Motor neuron (in vitro differentiated cells): ENCODE measurements at regions of chr17 and their contacts with region 1.

Region 1: GRCh38 chr17:72539981-72540897 is 419.4 kb downstream of the SOX9 start:
- ATAC-seq: peak; percentile 90 to 99 (median 94)
- H3K4me3 ChIP-seq: peak overlapping the region in 3 of 5 donors; percentile 13 to 18 (median 15)
- H3K27ac ChIP-seq: no peak overlapping the region
- H3K4me1 ChIP-seq: peaks cover 22 to 27% of the 10 kb centered on the region in 2 donors

Region 2: GRCh38 chr17:70636517-70637133 is 1903.6 kb before region 1 on chr17:
- in situ Hi-C with region 1: loop called in 5 of 9 experiments (anchors 10 to 25 kb)
- ATAC-seq: peak in 1 of 8 experiments; percentile 38
- H3K4me3 ChIP-seq: no peak overlapping the region
- H3K27ac ChIP-seq: no peak overlapping the region
- H3K4me1 ChIP-seq: peaks cover 0 to 3% of the 10 kb centered on the region in 2 donors

Region 3: GRCh38 chr17:70661342-70662222 is 1878.7 kb before region 1 on chr17:
- in situ Hi-C with region 1: loop called in 1 of 9 experiments (anchors 25 kb)
- ATAC-seq: peak; percentile 32 to 95 (median 70)
- H3K4me3 ChIP-seq: no peak overlapping the region
- H3K27ac ChIP-seq: no peak overlapping the region
- H3K4me1 ChIP-seq: peaks cover 10% of the 10 kb centered on the region in 2 donors

Region 4: GRCh38 chr17:70767102-70767701 is 1773.0 kb before region 1 on chr17:
- in situ Hi-C with region 1: loop called in 7 of 9 experiments (anchors 25 kb)
- ATAC-seq: no peak
- H3K4me3 ChIP-seq: no peak overlapping the region
- H3K27ac ChIP-seq: no peak overlapping the region
- H3K4me1 ChIP-seq: peaks cover 12 to 13% of the 10 kb centered on the region in 2 donors

Region 5: GRCh38 chr17:71472809-71473789 is 1067.1 kb before region 1 on chr17:
- in situ Hi-C with region 1: loop called in 2 of 9 experiments (anchors 25 kb)
- ATAC-seq: peak in 7 of 8 experiments; percentile 42 to 73 (median 67)
- H3K4me3 ChIP-seq: no peak overlapping the region
- H3K27ac ChIP-seq: no peak overlapping the region
- H3K4me1 ChIP-seq: no peaks in the 10 kb centered on the region

Region 6: GRCh38 chr17:72120642-72121163 is 419.5 kb before region 1 on chr17 and contains the start of gene SOX9:
- in situ Hi-C with region 1: loop called in 2 of 9 experiments (anchors 25 kb)
- ATAC-seq: peak; percentile 69 to 88 (median 78)
- H3K4me3 ChIP-seq: peak within 1 kb of the TSS; percentile 44 to 54 (median 48)
- H3K27ac ChIP-seq: no peak within 1 kb of the TSS
- H3K4me1 ChIP-seq: peaks cover 33 to 42% of the 10 kb centered on the region in 2 donors
- total RNA-seq, gene SOX9: 1.8 to 108 (median 17.3) TPM

Region 7: DNA sequence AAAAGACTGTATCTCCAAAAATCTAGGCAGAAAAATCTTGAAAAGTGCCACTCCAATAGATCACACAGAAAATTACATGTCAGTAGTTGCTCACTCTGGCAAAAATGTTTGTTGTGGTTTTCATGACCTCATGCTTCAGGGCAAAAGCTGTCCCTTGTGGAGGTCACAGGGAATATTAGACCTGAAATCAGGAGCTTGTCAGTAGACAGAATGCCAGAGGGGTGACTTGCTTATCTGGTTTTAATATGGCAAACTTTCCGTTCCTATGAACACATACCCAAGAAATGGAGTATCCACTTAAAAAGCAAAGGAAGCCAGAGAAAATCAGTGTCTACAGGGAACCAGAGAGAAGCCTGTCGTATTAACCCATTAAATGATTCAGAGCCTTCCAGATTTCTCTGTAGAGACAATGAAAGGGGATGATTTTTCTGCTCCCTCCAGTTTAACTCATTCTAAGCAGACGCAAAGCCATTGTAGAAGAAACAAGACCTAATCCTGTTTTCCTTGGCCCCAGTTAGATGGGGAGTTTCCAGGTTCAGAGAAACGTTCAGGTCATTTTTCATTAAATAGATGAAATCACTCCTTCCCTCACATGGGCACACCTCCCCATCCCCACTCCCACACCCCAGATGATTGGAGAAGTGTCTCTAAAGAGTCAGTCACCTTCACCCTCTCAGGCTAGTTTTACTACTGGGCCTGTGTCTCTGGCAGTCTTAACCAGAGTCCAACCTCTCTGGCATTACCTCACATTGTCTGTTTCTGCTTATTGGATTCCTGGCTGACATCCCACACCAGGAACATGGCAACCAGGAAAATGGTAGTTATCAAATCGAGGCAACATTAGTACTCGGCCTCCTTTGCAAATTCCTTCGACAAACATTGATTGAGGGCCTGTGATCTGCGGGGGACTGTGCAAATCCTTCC is 413.4 kb before region 1 on chr17:
- in situ Hi-C with region 1: loop called in 2 of 9 experiments (anchors 25 kb)
- ATAC-seq: peak in 4 of 8 experiments; percentile 27 to 67 (median 32)
- H3K4me3 ChIP-seq: no peak overlapping the region
- H3K27ac ChIP-seq: no peak overlapping the region
- H3K4me1 ChIP-seq: peaks cover 35 to 50% of the 10 kb centered on the region in 2 donors

Region 8: DNA sequence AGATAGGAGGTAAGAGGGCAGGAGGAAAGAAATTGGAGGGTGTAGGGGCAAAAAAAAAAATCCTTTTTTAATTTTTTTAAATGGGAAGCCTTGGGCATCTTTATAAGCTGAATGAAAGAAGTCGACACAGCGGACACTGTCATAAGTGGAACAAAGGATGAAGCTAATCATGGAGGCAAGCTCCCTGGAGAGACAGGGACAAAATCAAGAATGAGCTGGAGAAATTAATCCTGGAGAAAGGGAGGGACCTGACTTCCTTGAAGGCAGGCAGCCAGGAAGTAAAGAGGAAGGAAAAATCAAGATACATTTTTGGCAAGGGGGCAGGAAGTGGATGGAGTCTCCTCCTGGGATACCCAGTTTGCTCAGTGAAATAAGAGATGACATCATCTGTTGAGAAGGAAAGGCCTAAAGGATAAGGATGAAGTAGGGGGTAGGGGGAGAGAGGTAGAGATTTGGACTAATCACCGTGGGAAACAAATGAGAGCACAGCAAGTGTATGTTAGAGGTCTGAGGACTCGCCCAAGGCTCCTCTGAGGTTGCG is 373.0 kb after region 1 on chr17:
- in situ Hi-C with region 1: no loop called
- ATAC-seq: no peak
- H3K4me3 ChIP-seq: no peak overlapping the region
- H3K27ac ChIP-seq: no peak overlapping the region
- H3K4me1 ChIP-seq: peaks cover 0 to 5% of the 10 kb centered on the region in 2 donors